Activated CD4-positive, alpha-beta T cell treated with anti-CD3 and anti-CD28 coated beads, Interleukin-2, amount 10 ng/mL, durations not matched to agents 7 days and 5 days (primary cell): ENCODE measurements at regions of chr1 and their contacts with region 1.

Region 1: DNA sequence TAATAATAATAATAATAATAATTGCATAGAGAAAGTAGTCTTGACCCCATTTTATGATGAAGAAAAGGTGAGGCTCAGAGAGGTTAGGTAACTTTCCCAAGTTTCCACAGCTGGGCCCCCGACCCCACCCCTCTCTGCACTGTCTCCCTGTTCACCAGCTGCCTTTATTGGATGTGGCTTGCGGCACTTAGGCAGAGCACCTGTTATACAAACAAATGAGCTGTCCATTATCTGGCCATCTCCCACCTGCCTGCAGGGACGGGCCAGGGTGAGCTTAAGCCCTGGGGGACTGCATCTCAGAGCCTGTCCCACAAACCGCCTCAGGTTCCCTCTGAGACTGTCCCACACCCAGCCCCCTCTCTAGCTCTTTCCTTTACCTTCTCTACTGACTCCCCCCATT is 10.1 kb upstream of the EFNA1 start:
- DNase-seq: no peak
- H3K4me3 Mint-ChIP-seq: no peak overlapping the region
- H3K27ac Mint-ChIP-seq: no peak overlapping the region
- H3K4me1 Mint-ChIP-seq: no peaks in the 10 kb centered on the region
- H3K27me3 Mint-ChIP-seq: peaks cover 22% of the 10 kb centered on the region

Region 2: GRCh38 chr1:155145491-155145890 is 27.9 kb after region 1 on chr1:
- CTCF ChIA-PET with region 1: no interaction called
- POLR2A ChIA-PET with region 1: no interaction called
- DNase-seq: no peak
- H3K4me3 Mint-ChIP-seq: no peak overlapping the region
- H3K27ac Mint-ChIP-seq: no peak overlapping the region
- H3K4me1 Mint-ChIP-seq: peaks cover 11% of the 10 kb centered on the region
- H3K27me3 Mint-ChIP-seq: peaks cover 23% of the 10 kb centered on the region

Region 3: GRCh38 chr1:155167166-155168104 is 49.8 kb after region 1 on chr1:
- CTCF ChIA-PET with region 1: interaction called, 16 read pairs
- POLR2A ChIA-PET with region 1: no interaction called
- DNase-seq: peak; percentile 91
- H3K4me3 Mint-ChIP-seq: peak overlapping the region; percentile 25
- H3K27ac Mint-ChIP-seq: no peak overlapping the region
- H3K4me1 Mint-ChIP-seq: peaks cover 31% of the 10 kb centered on the region
- H3K27me3 Mint-ChIP-seq: no peaks in the 10 kb centered on the region